ENCODE measurements at regions of chr3 and their contacts with region 1.

Region 1: DNA sequence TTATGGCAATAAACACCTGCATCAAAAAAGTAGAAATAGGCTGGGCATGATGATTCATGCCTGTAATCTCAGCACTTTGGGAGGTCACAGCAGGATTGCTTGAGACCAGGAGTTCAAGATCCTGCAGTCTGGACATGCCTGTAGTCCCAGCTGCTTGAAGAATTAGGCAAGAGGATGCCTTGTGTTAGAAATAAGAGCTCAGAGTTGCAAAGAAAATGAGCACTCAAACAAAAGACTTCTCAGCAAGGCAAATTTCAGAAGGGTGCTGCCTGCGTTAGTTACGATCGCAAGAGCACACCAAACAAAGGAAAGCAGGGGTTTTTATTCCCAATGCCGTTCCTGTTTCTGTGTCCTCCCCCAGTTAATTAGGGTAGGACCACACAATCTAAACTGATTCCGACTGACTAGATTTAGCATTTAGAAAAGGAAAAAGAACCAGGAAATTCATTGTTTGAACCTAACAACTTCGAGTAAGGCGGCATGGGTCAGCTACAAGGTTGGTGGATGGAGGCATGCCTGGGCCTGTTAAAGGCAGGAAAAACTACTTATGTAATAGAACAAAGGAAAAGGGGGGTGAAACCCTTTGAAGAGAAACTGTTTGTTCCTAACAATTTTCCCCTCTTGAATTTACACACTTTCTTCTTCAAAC is 55.5 kb downstream of the DLG1 start:
- DNase-seq: peak; percentile 51
- H3K4me3 ChIP-seq: no peak overlapping the region
- H3K27ac ChIP-seq: no peak overlapping the region
- H3K4me1 ChIP-seq: no peaks in the 10 kb centered on the region
- H3K27me3 ChIP-seq: no peaks in the 10 kb centered on the region
- CTCF ChIP-seq: no peak

Region 2: DNA sequence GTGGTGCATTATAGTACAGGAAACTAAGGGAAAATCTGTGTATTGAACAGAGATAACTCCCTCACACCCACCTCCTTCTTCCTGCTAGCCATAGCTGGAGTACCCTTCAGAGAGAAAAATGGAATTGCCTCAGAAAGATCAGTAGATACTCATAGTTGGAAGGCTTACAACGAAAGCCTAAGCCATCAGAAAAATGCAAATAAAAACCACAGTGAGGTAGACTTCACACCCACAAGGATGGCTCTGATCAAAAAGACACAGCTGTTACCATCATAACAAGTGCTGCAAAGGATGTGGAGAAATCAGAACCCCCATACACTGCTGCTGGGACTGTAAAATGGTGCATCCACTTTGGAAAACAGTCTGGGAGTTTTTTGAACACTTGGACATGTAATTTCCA is 62.9 kb after region 1 on chr3:
- CTCF ChIA-PET with region 1: no interaction called
- dilution Hi-C with region 1: loop called (anchors 10 kb)
- in situ Hi-C with region 1: no loop called
- intact Hi-C with region 1: no loop called
- DNase-seq: peak; percentile 32
- H3K4me3 ChIP-seq: no peak overlapping the region
- H3K27ac ChIP-seq: peak overlapping the region; percentile 66
- H3K4me1 ChIP-seq: peaks cover 57% of the 10 kb centered on the region
- H3K27me3 ChIP-seq: no peaks in the 10 kb centered on the region
- CTCF ChIP-seq: no peak